ENCODE measurements at regions of chr10 and their contacts with region 1.

Region 1: DNA sequence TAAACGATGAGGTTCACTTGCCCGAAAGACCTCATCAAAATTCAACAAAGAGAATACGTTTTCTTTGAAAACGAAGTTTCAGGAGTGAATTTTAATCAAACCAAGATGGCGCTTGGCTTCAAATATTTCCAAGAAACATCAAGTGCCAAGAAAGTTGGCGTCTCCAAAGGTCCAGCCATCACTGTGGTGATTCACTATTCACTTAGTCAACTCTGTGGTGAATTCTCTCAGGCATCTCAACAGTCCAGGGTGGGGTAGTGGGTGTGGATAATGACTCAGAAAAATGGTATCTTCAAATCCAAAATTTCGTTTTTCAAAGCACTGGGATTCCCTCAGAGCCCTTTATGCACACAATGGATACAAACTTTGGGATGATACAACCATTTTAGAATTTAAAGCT is 133.1 kb downstream of the SVIL start:
- DNase-seq: peak; percentile 70
- H3K4me3 ChIP-seq: no peak overlapping the region
- H3K27me3 ChIP-seq: no peaks in the 10 kb centered on the region
- CTCF ChIP-seq: no peak

Region 2: DNA sequence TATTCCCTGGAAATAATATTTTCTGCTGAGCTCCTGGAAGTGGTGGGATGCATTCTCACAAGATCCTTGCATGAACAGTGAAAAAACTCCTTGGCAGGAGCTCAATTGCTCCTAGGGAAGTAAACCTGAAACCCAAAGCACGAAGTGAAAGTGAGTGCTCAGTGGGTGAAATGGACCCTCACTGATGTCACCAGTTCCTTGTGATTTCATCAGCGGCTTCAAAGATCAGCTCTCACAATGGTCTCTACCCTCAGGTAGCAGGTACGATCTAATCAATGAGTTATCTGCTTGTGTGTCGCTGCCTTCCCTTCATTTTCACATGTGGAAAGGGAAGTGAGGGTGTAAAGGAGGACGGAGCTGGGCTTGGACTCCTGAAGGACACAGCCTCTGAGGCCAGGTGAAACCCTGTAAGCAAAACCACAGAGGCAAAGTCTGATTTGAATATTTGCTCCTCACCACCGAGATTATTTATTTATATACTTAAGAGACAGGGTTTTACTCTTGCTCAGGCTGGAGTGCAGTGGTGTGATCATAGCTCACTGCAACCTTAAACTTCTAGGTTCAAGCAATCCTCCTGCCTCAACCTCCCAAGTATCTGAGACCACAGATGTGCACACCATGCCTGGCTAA is 468.3 kb before region 1 on chr10:
- CTCF ChIA-PET with region 1: no interaction called
- POLR2A ChIA-PET with region 1: no interaction called
- DNase-seq: no peak
- H3K4me3 ChIP-seq: no peak overlapping the region
- H3K27me3 ChIP-seq: no peaks in the 10 kb centered on the region
- CTCF ChIP-seq: no peak

Region 3: GRCh38 chr10:29328983-29329382 is 172.7 kb before region 1 on chr10:
- CTCF ChIA-PET with region 1: no interaction called
- POLR2A ChIA-PET with region 1: no interaction called
- DNase-seq: peak; percentile 58
- H3K4me3 ChIP-seq: no peak overlapping the region
- H3K27me3 ChIP-seq: peaks cover 8% of the 10 kb centered on the region
- CTCF ChIP-seq: no peak

Region 4: GRCh38 chr10:29517352-29517923 is 15.7 kb after region 1 on chr10:
- CTCF ChIA-PET with region 1: interaction called, 23 read pairs
- POLR2A ChIA-PET with region 1: no interaction called
- DNase-seq: no peak
- H3K4me3 ChIP-seq: no peak overlapping the region
- H3K27me3 ChIP-seq: no peaks in the 10 kb centered on the region
- CTCF ChIP-seq: peak; percentile 72

Region 5: GRCh38 chr10:29563420-29564035 is 61.8 kb after region 1 on chr10:
- CTCF ChIA-PET with region 1: no interaction called
- POLR2A ChIA-PET with region 1: no interaction called
- DNase-seq: no peak
- H3K4me3 ChIP-seq: no peak overlapping the region
- H3K27me3 ChIP-seq: no peaks in the 10 kb centered on the region
- CTCF ChIP-seq: no peak

Measured in BJ (cell line).